ENCODE measurements at regions of chr1 and their contacts with region 1.

Region 1: DNA sequence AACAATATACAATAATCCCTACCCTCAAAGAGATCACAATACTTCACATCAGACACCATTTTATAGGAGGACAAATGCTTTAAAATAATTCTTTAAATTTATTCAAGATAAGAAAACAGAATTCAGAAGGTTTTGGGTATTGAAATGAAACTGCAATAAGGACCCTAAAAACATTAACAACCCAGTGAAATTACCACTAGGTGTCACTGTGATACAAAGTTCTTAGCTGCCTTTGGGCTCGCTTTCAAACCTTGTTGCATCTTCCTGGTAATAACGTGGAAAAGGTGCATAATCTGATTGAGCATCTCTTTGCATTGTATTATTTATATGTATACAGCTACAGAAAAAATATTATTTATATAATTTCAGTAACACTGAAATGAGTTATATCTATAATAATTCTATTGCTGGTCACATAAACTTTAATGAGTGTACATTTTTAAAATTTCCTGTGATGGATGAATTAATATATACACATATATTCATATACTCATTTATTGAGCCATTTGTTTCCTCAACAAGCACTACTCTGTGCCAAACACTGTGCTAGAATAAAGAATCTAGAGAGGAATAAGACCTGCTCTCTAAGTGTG is 185.2 kb downstream of the FAF1 start:
- DNase-seq: no peak
- ATAC-seq: peak in 2 of 4 donors; percentile 55 to 76
- H3K4me3 ChIP-seq: no peak overlapping the region
- H3K27ac ChIP-seq: no peak overlapping the region
- H3K4me1 ChIP-seq: peaks cover 3% of the 10 kb centered on the region
- H3K27me3 ChIP-seq: no peaks in the 10 kb centered on the region
- CTCF ChIP-seq: peak; percentile 78

Region 2: DNA sequence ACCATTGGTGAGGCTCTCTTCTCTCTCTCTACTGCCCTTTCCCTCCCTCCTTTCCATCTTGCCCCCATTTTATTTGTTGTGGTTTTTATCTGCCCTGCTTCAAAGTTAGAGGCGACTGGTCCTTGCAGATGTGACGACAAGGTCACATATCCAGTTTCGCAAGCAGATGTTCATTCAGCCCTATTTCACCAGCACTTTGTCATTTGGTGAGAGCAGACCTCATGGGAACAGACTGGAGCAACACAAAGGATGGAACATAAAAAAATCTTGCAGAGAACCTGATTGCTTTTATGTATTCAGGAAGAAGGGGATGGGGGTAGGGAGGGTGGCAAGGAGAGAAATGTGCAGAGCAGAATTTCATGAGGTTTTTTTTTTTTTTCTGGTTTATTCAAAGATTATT is 581.9 kb before region 1 on chr1:
- intact Hi-C with region 1: no loop called
- DNase-seq: no peak
- ATAC-seq: no peak
- H3K4me3 ChIP-seq: no peak overlapping the region
- H3K27ac ChIP-seq: no peak overlapping the region
- H3K4me1 ChIP-seq: no peaks in the 10 kb centered on the region
- H3K27me3 ChIP-seq: peaks cover 0 to 6% (median 3%) of the 10 kb centered on the region in 3 donors
- CTCF ChIP-seq: no peak

Region 3: GRCh38 chr1:50929376-50929958 is 154.6 kb after region 1 on chr1:
- intact Hi-C with region 1: loop called in 1 of 2 experiments (anchors 10 kb)
- DNase-seq: no peak
- ATAC-seq: peak in 1 of 4 donors; percentile 52
- H3K4me3 ChIP-seq: no peak overlapping the region
- H3K27ac ChIP-seq: no peak overlapping the region
- H3K4me1 ChIP-seq: no peaks in the 10 kb centered on the region
- H3K27me3 ChIP-seq: no peaks in the 10 kb centered on the region
- CTCF ChIP-seq: peak; percentile 59

Region 4: DNA sequence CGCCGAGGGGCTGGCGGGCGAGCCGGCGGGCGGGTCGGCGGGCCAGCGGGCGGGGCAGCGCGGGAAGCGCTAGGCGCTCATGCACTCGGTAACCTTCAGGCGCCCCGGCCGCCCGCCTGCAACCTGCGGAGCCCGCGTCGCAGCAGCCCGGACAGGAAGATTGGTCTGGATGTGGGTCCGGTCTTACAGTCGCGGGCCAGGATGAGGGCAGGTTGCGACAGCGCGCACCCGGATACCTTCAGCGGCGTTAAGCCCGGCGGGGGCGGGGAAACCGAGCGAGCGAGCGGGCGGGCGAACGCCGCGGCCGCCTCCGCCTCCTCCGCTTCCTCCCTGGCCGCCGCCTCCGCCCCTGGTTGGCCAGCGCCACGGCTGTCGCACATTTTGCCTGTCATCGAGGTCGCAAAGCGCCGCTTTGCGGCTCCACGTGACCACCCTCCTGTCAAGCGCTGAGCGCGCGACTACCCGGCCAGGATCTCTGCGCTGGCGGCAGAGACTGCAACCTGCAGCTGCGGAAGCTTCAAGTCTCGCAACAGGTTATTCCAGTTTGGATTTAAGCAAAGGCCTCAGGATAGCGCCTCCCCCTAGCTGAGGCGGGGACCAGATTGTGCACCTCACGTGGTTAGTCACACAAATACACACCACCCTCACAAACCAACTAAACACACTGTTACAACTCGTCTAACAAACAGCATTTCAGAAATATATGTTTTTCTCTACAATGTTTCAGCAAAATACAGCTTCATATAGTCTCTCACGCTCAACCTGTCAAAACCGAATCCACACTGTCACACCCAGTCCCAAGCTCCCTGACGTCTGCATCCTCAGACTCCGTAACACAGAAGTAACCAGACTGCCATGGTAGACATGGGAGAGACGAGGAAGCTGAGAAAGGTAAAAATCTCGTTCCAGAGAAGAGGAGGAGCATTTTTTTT is 185.3 kb after region 1 on chr1 and contains the start of gene FAF1:
- intact Hi-C with region 1: loop called in 1 of 2 experiments (anchors 10 kb)
- DNase-seq: peak; percentile 97 to 99
- ATAC-seq: peak; percentile 97 to 99 (median 98)
- H3K4me3 ChIP-seq: peak within 1 kb of the TSS; percentile 82
- H3K27ac ChIP-seq: peak within 1 kb of the TSS; percentile 89
- H3K4me1 ChIP-seq: peaks cover 19% of the 10 kb centered on the region
- H3K27me3 ChIP-seq: no peaks in the 10 kb centered on the region
- CTCF ChIP-seq: peak; percentile 23
- total RNA-seq, gene FAF1: 84.0 to 120 (median 109) TPM

Region 5: DNA sequence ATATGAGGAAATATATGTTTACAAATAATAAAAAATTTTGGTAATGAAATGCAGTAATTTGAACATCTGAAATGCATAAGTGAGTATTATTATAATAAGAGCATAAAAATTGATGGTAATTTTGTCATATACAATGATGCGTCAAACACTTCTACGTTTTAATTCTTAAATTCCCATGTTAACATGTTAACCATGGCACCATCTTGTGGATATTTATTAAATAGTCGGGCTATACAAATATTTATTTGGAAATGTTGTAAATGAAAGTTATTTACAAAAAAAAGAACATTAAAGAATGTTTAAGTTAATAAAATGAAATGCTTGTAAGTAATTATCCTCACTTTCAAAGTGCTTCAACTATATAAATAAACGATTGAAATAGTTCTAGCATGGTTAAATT is 270.0 kb after region 1 on chr1:
- intact Hi-C with region 1: loop called (anchors 2 kb)
- DNase-seq: no peak
- ATAC-seq: peak in 1 of 4 donors; percentile 74
- H3K4me3 ChIP-seq: no peak overlapping the region
- H3K27ac ChIP-seq: no peak overlapping the region
- H3K4me1 ChIP-seq: no peaks in the 10 kb centered on the region
- H3K27me3 ChIP-seq: no peaks in the 10 kb centered on the region
- CTCF ChIP-seq: peak; percentile 55

Region 6: DNA sequence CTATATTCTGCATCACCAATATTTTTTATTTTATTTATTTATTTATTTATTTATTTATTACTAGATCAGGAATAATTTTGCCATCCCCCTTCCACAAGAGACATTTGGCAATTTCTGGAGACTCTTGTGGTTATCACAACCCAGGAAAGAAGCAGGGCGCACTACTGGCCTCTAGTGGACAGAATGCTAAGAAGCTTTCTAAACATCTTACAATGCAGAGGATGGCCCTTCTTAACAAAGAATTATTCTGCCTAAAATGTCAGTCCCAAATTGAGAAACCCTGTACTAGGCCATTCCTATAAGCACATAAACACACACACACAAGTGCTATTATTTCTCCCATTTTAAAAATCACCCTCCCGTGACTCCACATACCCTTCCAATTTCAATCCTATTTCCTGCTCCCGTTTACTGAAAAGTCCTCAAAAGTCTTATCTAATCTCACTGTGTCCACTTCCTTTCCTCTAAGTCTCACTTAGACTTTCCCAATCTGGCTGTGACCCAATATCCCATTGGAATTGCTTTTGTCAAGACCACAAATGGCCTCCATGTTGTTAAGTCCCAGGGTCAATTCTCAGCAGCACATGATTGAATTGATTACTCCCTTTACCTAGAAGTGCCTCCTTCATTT is 417.5 kb after region 1 on chr1:
- intact Hi-C with region 1: loop called (anchors 2 kb)
- DNase-seq: peak; percentile 43 to 70
- ATAC-seq: peak in 3 of 4 donors; percentile 57 to 80 (median 63)
- H3K4me3 ChIP-seq: no peak overlapping the region
- H3K27ac ChIP-seq: no peak overlapping the region
- H3K4me1 ChIP-seq: no peaks in the 10 kb centered on the region
- H3K27me3 ChIP-seq: no peaks in the 10 kb centered on the region
- CTCF ChIP-seq: peak; percentile 80